Posterior vena cava (tissue), 2 donors: ENCODE measurements at regions of chr7 and their contacts with region 1.

Region 1: DNA sequence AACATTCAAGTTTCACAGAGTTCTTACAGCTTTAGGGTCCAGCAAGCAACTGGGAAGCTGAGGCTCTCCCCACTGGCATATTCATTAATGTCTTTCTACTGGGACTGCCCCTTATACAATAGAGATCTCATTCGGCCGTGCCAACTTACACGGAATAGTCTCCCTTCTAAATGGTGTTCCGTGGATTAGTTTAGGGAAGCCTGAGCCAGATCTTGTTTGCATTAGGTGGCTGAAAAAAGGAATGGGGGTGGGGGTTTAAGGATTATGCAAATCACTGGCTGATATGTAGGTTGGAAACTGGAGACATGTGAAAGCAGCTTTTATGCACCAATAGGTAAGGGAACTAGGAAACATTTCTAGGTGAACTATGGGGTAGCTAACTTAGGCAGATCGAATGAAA is 218.3 kb downstream of the TRIL start:
- DNase-seq: no peak

Region 2: DNA sequence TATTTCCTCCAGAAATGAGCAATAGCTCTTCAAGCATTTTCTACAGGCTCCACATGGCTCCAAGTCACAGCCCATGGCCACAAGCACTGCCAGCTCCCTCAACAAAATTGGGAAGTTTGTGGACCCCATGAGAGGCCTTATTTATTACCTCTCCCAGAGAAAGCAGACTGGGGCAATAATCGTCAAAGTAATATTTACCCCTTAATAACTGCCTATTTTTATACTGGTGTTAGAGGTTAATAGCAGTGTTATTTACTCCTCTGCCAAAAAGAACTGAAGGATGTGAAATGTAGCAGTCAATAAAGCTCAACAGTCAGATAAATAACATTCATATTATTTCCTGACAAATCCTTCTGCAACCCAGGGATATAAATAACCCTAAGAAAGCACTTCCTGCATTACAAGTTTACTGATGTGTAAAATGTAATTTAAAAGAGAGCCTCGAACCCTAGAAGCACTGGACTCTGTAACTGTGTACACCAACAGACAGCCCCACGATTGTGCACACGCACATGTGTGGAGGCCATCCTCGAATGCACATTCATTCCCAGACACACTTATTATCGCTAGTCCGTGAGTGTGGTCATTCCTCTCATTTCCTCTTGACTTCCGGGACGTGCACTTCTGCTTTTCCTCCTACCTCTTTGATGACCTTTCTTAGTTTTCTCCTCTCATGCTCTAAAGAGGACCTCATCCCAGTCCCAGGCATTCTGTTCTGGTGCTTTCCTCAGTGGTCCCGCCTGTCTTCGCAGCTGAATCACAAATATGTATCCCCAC is 1339.8 kb before region 1 on chr7:
- intact Hi-C with region 1: loop called in 1 of 2 experiments (anchors 5 kb)
- DNase-seq: no peak